GM12878 (cell line): ENCODE measurements at regions of chr6 and their contacts with region 1.

Region 1: DNA sequence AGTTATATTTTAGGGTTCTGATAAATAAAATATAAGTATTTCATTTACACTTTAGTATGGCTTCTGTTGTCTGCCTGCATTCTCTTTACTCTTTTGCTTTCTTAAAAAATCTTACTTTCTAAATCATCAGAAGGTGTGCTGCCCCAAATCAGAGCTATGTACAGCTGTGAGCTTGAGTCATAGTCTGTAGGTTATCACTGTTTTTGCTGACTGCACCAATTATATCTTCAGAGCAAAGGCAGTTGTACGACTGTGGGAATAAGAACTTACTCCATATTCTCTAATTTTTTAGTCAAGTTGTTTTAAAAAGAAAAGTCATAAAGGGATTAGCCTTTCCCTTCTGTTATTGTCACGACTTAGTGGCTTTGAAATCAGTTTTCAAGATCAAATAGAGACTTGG is 1649.0 kb downstream of the HACE1 start:
- DNase-seq: no peak
- ATAC-seq: peak; percentile 69
- H3K4me3 ChIP-seq: no peak overlapping the region
- H3K27ac ChIP-seq: no peak overlapping the region
- H3K4me1 ChIP-seq: no peaks in the 10 kb centered on the region
- H3K27me3 ChIP-seq: no peaks in the 10 kb centered on the region
- CTCF ChIP-seq: no peak
- EP300 ChIP-seq: no peak
- POLR2A ChIP-seq: no peak
- RAD21 ChIP-seq: no peak

Region 2: GRCh38 chr6:102944475-102944874 is 266.2 kb before region 1 on chr6:
- CTCF ChIA-PET with region 1: no interaction called
- POLR2A ChIA-PET with region 1: no interaction called
- RAD21 ChIA-PET with region 1: no interaction called
- SMC1A ChIA-PET with region 1: no interaction called
- in situ Hi-C with region 1: no loop called
- intact Hi-C with region 1: no loop called
- DNase-seq: no peak
- ATAC-seq: no peak
- H3K4me3 ChIP-seq: no peak overlapping the region
- H3K27ac ChIP-seq: no peak overlapping the region
- H3K4me1 ChIP-seq: no peaks in the 10 kb centered on the region
- H3K27me3 ChIP-seq: no peaks in the 10 kb centered on the region
- CTCF ChIP-seq: no peak
- EP300 ChIP-seq: no peak
- POLR2A ChIP-seq: no peak
- RAD21 ChIP-seq: no peak

Region 3: GRCh38 chr6:103191391-103192093 is 19.1 kb before region 1 on chr6:
- CTCF ChIA-PET with region 1: interaction called, 3 read pairs
- POLR2A ChIA-PET with region 1: interaction called, 5 read pairs
- RAD21 ChIA-PET with region 1: interaction called, 4 read pairs
- SMC1A ChIA-PET with region 1: interaction called, 18 read pairs
- in situ Hi-C with region 1: no loop called
- intact Hi-C with region 1: no loop called
- DNase-seq: no peak
- ATAC-seq: no peak
- H3K4me3 ChIP-seq: no peak overlapping the region
- H3K27ac ChIP-seq: no peak overlapping the region
- H3K4me1 ChIP-seq: no peaks in the 10 kb centered on the region
- H3K27me3 ChIP-seq: no peaks in the 10 kb centered on the region
- CTCF ChIP-seq: no peak
- EP300 ChIP-seq: no peak
- POLR2A ChIP-seq: no peak
- RAD21 ChIP-seq: no peak

Region 4: DNA sequence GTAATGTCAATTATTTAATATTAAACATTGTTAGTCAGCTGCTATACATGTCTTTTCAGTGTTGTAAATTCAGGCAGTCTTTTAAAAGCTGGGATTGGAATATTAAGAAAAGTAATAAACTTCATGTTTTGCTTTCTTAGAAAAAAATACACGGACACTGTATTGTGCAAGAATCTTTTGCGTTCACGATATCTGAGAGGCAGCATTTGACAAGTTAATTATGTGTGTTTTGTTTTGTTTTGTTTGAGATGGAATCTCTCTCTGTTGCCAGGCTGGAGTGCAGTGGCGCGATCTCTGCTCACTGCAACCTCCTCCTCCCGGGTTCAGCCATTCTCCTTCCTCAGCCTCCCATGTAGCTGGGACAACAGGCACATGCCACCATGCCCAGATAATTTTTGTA is 12.3 kb before region 1 on chr6:
- CTCF ChIA-PET with region 1: interaction called, 9 read pairs
- POLR2A ChIA-PET with region 1: interaction called, 3 read pairs
- RAD21 ChIA-PET with region 1: interaction called, 8 read pairs
- SMC1A ChIA-PET with region 1: interaction called, 27 read pairs
- in situ Hi-C with region 1: no loop called
- intact Hi-C with region 1: no loop called
- DNase-seq: no peak
- ATAC-seq: no peak
- H3K4me3 ChIP-seq: no peak overlapping the region
- H3K27ac ChIP-seq: no peak overlapping the region
- H3K4me1 ChIP-seq: no peaks in the 10 kb centered on the region
- H3K27me3 ChIP-seq: no peaks in the 10 kb centered on the region
- CTCF ChIP-seq: no peak
- EP300 ChIP-seq: no peak
- POLR2A ChIP-seq: no peak
- RAD21 ChIP-seq: no peak